ENCODE measurements at regions of chr9 and their contacts with region 1.

Region 1: DNA sequence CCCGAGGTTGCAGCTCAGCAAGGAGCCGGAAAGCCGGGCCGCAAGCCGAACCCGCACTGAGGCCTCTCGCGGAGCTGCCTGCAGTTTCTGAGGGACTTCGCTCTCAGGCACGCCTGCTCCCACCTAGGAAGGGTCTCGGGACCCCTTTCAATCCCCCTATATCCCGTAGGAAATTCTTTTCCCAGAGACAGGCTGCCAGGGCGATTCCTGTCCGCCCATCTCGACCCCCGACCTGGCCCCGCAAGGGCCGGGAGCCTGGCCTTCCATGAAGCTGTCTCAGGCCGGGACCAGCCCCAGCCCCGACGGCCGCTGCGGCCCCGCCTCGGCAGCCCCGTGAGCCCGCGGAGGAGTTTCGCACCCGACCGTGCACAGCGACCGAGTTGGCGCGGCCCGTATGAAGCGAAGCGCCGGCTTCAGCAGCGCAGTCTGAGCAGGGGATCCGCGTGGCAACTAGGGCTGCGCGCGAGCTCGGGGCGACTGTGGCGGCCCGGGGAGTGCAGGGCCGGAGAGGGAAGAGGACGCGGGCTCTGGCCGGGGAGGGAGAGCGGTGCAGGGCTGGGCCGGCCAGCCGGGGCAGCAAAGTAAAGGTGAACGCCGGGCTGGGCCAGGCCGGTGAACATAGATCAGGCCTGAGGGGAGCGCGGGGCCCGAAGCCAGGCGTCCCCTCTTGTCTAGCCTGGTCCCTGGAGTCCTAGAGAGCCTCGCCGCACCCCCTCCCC is 977 bp upstream of the PRDM12 start:
- DNase-seq: no peak
- H3K4me3 ChIP-seq: no peak overlapping the region
- H3K27ac ChIP-seq: no peak overlapping the region
- H3K4me1 ChIP-seq: no peaks in the 10 kb centered on the region
- H3K27me3 ChIP-seq: peaks cover 73% of the 10 kb centered on the region
- CTCF ChIP-seq: no peak
- POLR2A ChIP-seq: no peak

Region 2: GRCh38 chr9:130590305-130590704 is 73.1 kb before region 1 on chr9:
- intact Hi-C with region 1: loop called (anchors 10 kb)
- DNase-seq: no peak
- H3K4me3 ChIP-seq: no peak overlapping the region
- H3K27ac ChIP-seq: no peak overlapping the region
- H3K4me1 ChIP-seq: no peaks in the 10 kb centered on the region
- H3K27me3 ChIP-seq: no peaks in the 10 kb centered on the region
- CTCF ChIP-seq: no peak
- POLR2A ChIP-seq: no peak

Measured in prostate gland (tissue), 2 donors.